IMR-90 (cell line): ENCODE measurements at regions of chr2 and their contacts with region 1.

Region 1: GRCh38 chr2:147910990-147911473 is 66.2 kb downstream of the ACVR2A start:
- DNase-seq: peak; percentile 77
- ATAC-seq: peak; percentile 53
- H3K4me3 ChIP-seq: no peak overlapping the region
- H3K27ac ChIP-seq: no peak overlapping the region
- H3K4me1 ChIP-seq: no peaks in the 10 kb centered on the region
- H3K27me3 ChIP-seq: no peaks in the 10 kb centered on the region
- CTCF ChIP-seq: peak; percentile 84
- POLR2A ChIP-seq: peak; percentile 43; the same call in 1 of the 2 replicates
- RAD21 ChIP-seq: peak; percentile 88

Region 2: GRCh38 chr2:146748046-146748445 is 1163.0 kb before region 1 on chr2:
- CTCF ChIA-PET with region 1: no interaction called
- POLR2A ChIA-PET with region 1: no interaction called
- dilution Hi-C with region 1: no loop called
- in situ Hi-C with region 1: loop called (anchors 10 kb)
- intact Hi-C with region 1: no loop called
- DNase-seq: no peak
- ATAC-seq: no peak
- H3K4me3 ChIP-seq: no peak overlapping the region
- H3K27ac ChIP-seq: no peak overlapping the region
- H3K4me1 ChIP-seq: no peaks in the 10 kb centered on the region
- H3K27me3 ChIP-seq: no peaks in the 10 kb centered on the region
- CTCF ChIP-seq: no peak
- POLR2A ChIP-seq: no peak
- RAD21 ChIP-seq: no peak

Region 3: GRCh38 chr2:147045113-147045512 is 865.9 kb before region 1 on chr2:
- CTCF ChIA-PET with region 1: interaction called, 4 read pairs
- POLR2A ChIA-PET with region 1: no interaction called
- dilution Hi-C with region 1: no loop called
- in situ Hi-C with region 1: no loop called
- intact Hi-C with region 1: loop called (anchors 1 kb)
- DNase-seq: peak; percentile 22
- ATAC-seq: peak; percentile 67
- H3K4me3 ChIP-seq: no peak overlapping the region
- H3K27ac ChIP-seq: no peak overlapping the region
- H3K4me1 ChIP-seq: no peaks in the 10 kb centered on the region; the same call in 1 of the 2 replicates
- H3K27me3 ChIP-seq: no peaks in the 10 kb centered on the region
- CTCF ChIP-seq: peak; percentile 41
- POLR2A ChIP-seq: no peak
- RAD21 ChIP-seq: peak; percentile 36; the same call in 1 of the 2 replicates

Region 4: DNA sequence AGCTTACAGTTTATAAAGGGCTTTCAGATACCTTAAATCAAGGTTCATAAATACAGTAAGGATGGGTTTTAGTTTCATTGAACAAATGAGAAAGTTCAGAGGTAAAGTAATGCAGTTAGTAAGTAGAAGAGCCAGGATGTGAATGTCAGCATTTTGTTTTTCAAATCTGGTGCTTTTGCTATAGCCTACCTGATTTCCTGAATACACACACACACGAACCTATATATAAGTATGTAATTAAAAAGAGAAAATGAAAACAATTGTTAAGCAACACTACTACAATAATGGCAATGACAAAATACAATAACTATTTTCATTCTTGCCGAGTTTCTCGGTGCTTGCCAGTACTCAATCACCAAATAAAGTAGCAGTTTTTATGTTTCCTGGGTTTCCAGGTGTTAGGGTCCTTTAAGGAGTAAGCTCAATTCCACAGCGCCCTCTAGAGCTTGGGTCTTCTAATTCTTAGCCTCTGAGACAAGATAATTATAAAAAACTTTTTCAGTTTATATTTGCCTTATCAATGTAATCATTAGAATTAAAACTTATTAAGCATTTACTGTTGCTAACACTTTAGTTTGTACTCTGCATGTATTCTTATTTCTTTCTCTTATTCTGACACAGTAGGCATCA is 579.1 kb before region 1 on chr2:
- CTCF ChIA-PET with region 1: no interaction called
- POLR2A ChIA-PET with region 1: no interaction called
- dilution Hi-C with region 1: no loop called
- in situ Hi-C with region 1: no loop called
- intact Hi-C with region 1: loop called (anchors 5 kb)
- DNase-seq: no peak
- ATAC-seq: no peak
- H3K4me3 ChIP-seq: no peak overlapping the region
- H3K27ac ChIP-seq: no peak overlapping the region
- H3K4me1 ChIP-seq: no peaks in the 10 kb centered on the region
- H3K27me3 ChIP-seq: no peaks in the 10 kb centered on the region
- CTCF ChIP-seq: no peak
- POLR2A ChIP-seq: no peak
- RAD21 ChIP-seq: no peak

Region 5: GRCh38 chr2:147843864-147844696 is 67.0 kb before region 1 on chr2:
- CTCF ChIA-PET with region 1: interaction called, 3 read pairs
- POLR2A ChIA-PET with region 1: no interaction called
- dilution Hi-C with region 1: no loop called
- in situ Hi-C with region 1: no loop called
- intact Hi-C with region 1: loop called (anchors 2 kb)
- DNase-seq: peak; percentile 85
- ATAC-seq: peak; percentile 93
- H3K4me3 ChIP-seq: peak overlapping the region; percentile 96
- H3K27ac ChIP-seq: peak overlapping the region; percentile 93
- H3K4me1 ChIP-seq: peaks cover 3% of the 10 kb centered on the region; the same call in 1 of the 2 replicates
- H3K27me3 ChIP-seq: no peaks in the 10 kb centered on the region
- CTCF ChIP-seq: peak; percentile 22; the same call in 1 of the 2 replicates
- POLR2A ChIP-seq: peak; percentile 78
- RAD21 ChIP-seq: no peak